Right cardiac atrium (tissue), 5 donors: ENCODE measurements at regions of chr9 and their contacts with region 1.

Region 1: GRCh38 chr9:34343090-34343489 is 13.7 kb downstream of the NUDT2 start:
- DNase-seq: peak; percentile 83 to 92 (median 92)
- ATAC-seq: peak; percentile 83 to 89
- H3K4me3 ChIP-seq: no peak overlapping the region
- H3K27ac ChIP-seq: peak overlapping the region; percentile 30
- H3K4me1 ChIP-seq: peaks cover 2% of the 10 kb centered on the region
- H3K27me3 ChIP-seq: no peaks in the 10 kb centered on the region

Region 2: DNA sequence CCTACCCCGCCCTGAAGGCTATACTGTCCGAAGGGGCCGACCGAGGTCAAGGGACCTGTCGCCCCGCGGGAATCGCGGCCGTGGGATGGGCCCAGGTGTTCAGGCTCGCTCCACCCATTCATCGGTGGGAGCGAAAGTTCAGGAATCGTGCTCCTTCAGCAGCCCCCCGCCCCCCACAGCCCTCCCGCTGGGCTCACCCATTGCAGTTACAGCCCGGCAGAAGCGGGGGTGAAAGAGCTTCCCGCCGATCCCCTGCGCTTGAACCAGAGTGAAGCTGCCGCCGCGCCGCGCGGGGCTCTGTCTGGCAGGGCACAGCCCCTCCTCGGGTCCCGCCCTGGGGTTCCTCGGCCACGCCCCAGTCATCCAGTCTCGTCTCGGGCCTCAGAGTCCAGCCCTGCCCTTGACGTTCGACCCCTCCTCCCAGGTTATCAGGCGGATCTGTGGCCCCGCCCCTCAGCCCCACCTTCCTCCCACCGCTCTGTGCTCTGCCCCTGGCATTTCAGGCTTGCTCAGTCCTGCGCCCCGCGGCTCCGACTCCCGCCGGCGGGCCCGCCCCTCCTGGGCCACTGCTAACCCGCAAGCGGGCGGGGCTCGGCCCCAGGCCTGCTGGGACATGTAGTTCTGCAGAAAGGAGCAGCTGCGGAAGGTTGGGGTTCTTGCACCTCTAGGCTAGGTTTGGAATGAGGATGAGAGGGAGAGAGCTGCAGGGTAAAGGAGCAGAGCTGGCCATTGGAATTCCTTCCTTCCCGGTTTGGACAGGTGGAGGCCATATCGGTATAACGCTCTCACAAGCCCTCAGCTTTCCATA is 33.7 kb after region 1 on chr9 and contains the start of gene MYORG:
- intact Hi-C with region 1: loop called in 1 of 4 experiments (anchors 2 kb)
- DNase-seq: peak; percentile 92 to 97 (median 96)
- ATAC-seq: peak; percentile 86 to 87
- H3K4me3 ChIP-seq: peak within 1 kb of the TSS; percentile 67
- H3K27ac ChIP-seq: peak within 1 kb of the TSS; percentile 37
- H3K4me1 ChIP-seq: peaks cover 2% of the 10 kb centered on the region
- H3K27me3 ChIP-seq: no peaks in the 10 kb centered on the region
- total RNA-seq, gene MYORG: 4.6 to 5.2 (median 4.8) TPM